ENCODE measurements at regions of chr1 and their contacts with region 1.

Region 1: DNA sequence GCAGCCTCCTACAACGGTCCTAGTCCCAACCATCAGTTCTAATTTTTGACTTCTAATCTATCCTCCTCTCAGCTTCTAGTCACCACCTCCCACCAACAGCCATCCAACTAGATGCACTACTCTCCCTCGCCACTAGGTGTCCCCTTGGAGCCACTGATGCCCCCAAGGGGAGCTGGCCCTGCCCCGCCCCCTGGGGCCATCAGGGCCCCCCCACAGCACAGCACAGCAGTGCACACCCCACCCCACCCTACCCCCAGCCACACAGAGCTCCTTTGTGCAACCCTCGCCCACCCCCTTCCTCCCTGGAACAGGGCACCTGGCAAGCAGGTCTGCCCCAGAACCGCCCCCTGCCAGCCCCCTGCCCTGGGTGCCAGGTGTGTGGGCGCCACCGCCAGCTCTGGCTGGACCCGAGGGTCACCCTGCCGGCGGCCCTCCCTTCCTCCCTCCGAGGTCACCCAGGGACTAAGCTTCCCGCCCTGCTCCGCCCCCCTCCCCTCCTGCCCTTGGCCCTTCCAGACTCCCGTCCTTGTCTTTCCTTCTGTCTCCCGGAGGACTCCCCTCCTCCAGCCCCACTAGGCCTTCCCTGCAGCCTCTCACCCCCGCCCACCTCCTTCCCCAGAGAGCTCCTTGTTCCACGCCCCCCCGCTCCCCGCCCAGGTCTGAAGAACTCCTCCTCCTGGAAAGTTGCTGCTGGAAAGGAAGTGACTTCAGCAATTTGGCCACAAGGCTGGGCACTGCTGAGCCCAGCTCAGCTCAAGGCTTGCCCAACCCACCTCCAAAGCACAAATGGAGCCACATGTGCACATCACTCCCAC is 47.0 kb downstream of the AHDC1 start:
- DNase-seq: peak; percentile 92
- ATAC-seq: peak; percentile 76
- H3K4me3 ChIP-seq: no peak overlapping the region
- H3K27ac ChIP-seq: peak overlapping the region; percentile 88
- H3K4me1 ChIP-seq: peaks cover 21% of the 10 kb centered on the region
- H3K27me3 ChIP-seq: no peaks in the 10 kb centered on the region
- CTCF ChIP-seq: peak; percentile 81

Region 2: GRCh38 chr1:27031235-27032118 is 525.5 kb before region 1 on chr1:
- CTCF ChIA-PET with region 1: no interaction called
- POLR2A ChIA-PET with region 1: no interaction called
- intact Hi-C with region 1: no loop called
- DNase-seq: peak; percentile 92
- ATAC-seq: peak; percentile 89
- H3K4me3 ChIP-seq: peak overlapping the region; percentile 60
- H3K27ac ChIP-seq: peak overlapping the region; percentile 93
- H3K4me1 ChIP-seq: peaks cover 16% of the 10 kb centered on the region
- H3K27me3 ChIP-seq: no peaks in the 10 kb centered on the region
- CTCF ChIP-seq: no peak

Region 3: GRCh38 chr1:27392096-27392777 is 164.8 kb before region 1 on chr1 and contains the start of gene GPR3:
- CTCF ChIA-PET with region 1: interaction called, 11 read pairs
- POLR2A ChIA-PET with region 1: no interaction called
- intact Hi-C with region 1: no loop called
- DNase-seq: peak; percentile 94
- ATAC-seq: peak; percentile 82
- H3K4me3 ChIP-seq: peak within 1 kb of the TSS; percentile 100
- H3K27ac ChIP-seq: peak within 1 kb of the TSS; percentile 64
- H3K4me1 ChIP-seq: peaks cover 25% of the 10 kb centered on the region
- H3K27me3 ChIP-seq: no peaks in the 10 kb centered on the region
- CTCF ChIP-seq: peak; percentile 65
- total RNA-seq, gene GPR3: 4.7 TPM in 2 replicates

Region 4: GRCh38 chr1:27473755-27474154 is 83.2 kb before region 1 on chr1:
- CTCF ChIA-PET with region 1: interaction called, 11 read pairs
- POLR2A ChIA-PET with region 1: no interaction called
- intact Hi-C with region 1: no loop called
- DNase-seq: no peak
- ATAC-seq: no peak
- H3K4me3 ChIP-seq: no peak overlapping the region
- H3K27ac ChIP-seq: no peak overlapping the region
- H3K4me1 ChIP-seq: no peaks in the 10 kb centered on the region
- H3K27me3 ChIP-seq: no peaks in the 10 kb centered on the region
- CTCF ChIP-seq: no peak

Region 5: GRCh38 chr1:27568300-27569087 is 11.5 kb after region 1 on chr1:
- CTCF ChIA-PET with region 1: interaction called, 19 read pairs
- POLR2A ChIA-PET with region 1: interaction called, 3 read pairs
- intact Hi-C with region 1: no loop called
- DNase-seq: peak; percentile 97
- ATAC-seq: peak; percentile 86
- H3K4me3 ChIP-seq: peak overlapping the region; percentile 52; the same call in 1 of the 2 replicates
- H3K27ac ChIP-seq: peak overlapping the region; percentile 39
- H3K4me1 ChIP-seq: peaks cover 30% of the 10 kb centered on the region
- H3K27me3 ChIP-seq: no peaks in the 10 kb centered on the region
- CTCF ChIP-seq: peak; percentile 78

Region 6: DNA sequence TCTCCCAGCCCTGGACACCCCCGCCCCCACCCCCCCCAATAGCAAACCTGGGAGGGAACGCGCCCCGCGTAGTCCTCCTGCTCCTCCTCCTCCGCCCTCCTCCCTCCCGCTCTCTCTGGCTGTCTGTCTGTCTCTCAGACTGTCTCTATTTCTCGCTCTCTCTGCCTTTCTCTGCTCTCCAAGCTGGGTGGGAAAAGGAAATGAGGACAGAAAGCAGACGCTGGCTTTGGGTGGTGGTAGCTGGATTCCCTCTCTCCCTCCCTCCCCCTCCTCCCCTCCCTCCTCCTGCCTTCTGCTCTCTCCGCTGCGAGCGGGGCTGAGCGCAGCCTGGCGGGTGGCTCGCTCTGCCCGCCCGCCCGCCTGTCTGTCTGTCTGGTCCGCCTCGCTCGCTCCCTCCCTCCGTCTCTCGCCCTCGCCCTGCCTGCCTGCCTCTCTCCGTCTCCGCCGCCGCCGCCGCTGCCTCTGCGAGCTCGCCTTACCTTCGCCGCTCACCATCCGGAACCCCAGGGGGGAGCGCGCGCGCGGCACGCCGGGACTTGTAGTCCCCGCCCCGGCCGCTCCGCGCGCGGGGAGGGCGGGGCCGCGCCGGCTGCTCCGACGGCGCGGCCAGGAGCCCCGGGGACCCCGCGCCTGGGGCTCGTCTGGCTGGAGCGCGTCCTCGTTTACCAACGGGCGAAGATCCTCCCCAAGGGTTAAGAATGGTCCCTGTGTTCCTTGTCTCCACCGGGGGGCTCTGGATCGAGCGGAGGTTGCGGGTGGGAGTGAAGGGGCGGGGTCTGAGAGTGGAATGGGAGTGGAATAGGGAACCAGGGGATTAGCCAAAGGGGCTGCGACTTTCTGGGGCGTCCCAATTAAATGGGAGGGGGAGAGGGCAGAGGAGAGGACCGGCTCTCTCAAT is 46.9 kb after region 1 on chr1 and contains the start of gene AHDC1:
- CTCF ChIA-PET with region 1: interaction called, 30 read pairs
- POLR2A ChIA-PET with region 1: interaction called, 32 read pairs
- intact Hi-C with region 1: loop called (anchors 1 kb)
- DNase-seq: peak; percentile 90
- ATAC-seq: peak; percentile 57
- H3K4me3 ChIP-seq: peak within 1 kb of the TSS; percentile 88
- H3K27ac ChIP-seq: peak within 1 kb of the TSS; percentile 46
- H3K4me1 ChIP-seq: peaks cover 39% of the 10 kb centered on the region
- H3K27me3 ChIP-seq: no peaks in the 10 kb centered on the region
- CTCF ChIP-seq: no peak
- total RNA-seq, gene AHDC1: 15.2 and 20.4 TPM in 2 replicates

Region 7: DNA sequence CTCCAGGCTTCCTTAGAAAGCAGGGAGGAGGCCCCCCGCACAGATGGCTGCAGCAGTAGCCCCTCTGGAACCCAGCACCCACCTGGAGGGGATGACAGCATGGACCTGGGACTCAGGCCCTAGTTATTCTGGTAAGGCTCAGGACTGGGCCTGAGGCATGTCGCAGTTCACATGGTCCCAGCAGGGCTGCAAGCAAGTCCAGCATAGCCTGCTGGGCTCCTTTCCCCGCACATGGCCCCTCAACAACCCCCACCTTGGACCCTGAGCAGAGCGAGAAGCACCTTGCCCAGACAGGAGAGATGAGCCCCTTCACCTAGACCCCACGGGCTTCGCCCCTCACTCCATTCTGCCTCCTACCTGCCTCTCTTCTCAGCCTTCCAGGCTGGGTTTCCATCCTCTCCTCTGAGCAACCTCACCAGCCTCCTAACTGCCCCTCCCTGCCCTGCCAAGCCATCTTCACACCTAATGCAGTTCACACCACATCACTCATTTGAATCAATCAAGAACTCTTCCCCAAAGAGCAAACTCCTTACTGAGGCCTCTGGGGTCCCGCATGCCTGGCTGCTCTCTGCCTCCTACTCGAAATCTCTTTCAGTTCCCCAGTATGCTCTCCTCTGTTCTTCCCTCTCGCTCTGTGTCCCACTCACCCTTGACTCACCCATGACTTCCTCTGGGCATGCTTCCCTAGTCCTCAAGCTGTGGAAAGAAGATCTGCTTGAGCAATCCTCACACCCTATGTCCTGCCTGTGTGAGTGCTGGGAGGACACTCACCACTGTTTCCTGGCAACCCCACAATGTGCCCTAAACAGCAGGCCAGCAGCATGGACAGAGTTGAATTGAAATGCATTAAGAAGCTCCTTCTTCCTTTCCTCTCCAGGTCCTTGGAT is 305.9 kb after region 1 on chr1:
- CTCF ChIA-PET with region 1: no interaction called
- POLR2A ChIA-PET with region 1: no interaction called
- intact Hi-C with region 1: no loop called
- DNase-seq: peak; percentile 97
- ATAC-seq: peak; percentile 99
- H3K4me3 ChIP-seq: no peak overlapping the region
- H3K27ac ChIP-seq: peak overlapping the region; percentile 90
- H3K4me1 ChIP-seq: peaks cover 33% of the 10 kb centered on the region
- H3K27me3 ChIP-seq: no peaks in the 10 kb centered on the region
- CTCF ChIP-seq: no peak

Region 8: GRCh38 chr1:28172713-28173150 is 615.7 kb after region 1 on chr1:
- CTCF ChIA-PET with region 1: no interaction called
- POLR2A ChIA-PET with region 1: no interaction called
- intact Hi-C with region 1: no loop called
- DNase-seq: no peak
- ATAC-seq: no peak
- H3K4me3 ChIP-seq: no peak overlapping the region
- H3K27ac ChIP-seq: no peak overlapping the region
- H3K4me1 ChIP-seq: peaks cover 14% of the 10 kb centered on the region
- H3K27me3 ChIP-seq: no peaks in the 10 kb centered on the region
- CTCF ChIP-seq: no peak

Measured in PC-3 (cell line).